ACHN (cell line): ENCODE measurements at regions of chr15 and their contacts with region 1.

Region 1: GRCh38 chr15:57527382-57528091 is 64.2 kb upstream of the MYZAP start:
- DNase-seq: peak; percentile 74

Region 2: DNA sequence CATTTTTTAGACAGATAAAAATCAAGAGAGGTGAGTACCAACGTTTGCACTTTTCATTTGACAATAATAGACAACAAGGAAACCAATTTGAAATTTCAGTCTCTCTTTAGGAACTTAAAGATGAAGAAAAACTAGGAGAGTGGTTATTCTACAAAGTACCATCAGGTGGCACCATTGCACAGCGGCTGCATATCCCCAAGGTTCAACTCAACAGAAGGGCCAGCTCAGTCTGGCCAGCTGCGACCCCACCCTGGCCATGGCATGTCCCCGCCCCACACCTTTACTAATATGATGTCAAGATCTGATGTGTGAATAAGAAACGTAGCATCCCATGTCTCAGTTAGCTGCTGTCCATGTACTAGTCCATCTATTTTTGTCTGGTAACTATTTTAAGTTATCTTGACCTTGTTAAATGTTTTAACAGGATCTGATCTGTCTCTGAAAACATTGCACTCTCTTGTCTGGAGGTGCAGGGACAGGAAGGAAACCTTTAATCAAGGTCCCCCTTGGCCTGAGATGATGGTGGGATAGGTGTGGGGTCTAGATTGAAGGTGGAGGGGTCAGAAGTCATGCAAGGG is 186.8 kb before region 1 on chr15:
- in situ Hi-C with region 1: loop called (anchors 25 kb)
- DNase-seq: peak; percentile 59

Region 3: GRCh38 chr15:57395292-57395691 is 132.2 kb before region 1 on chr15:
- in situ Hi-C with region 1: no loop called
- DNase-seq: peak; percentile 97

Region 4: GRCh38 chr15:57947781-57948180 is 420.2 kb after region 1 on chr15:
- in situ Hi-C with region 1: no loop called
- DNase-seq: no peak